Common myeloid progenitor, CD34-positive (primary cell): ENCODE measurements at regions of chr12 and their contacts with region 1.

Region 1: GRCh38 chr12:53220801-53221202 is 11.2 kb downstream of the RARG start:
- DNase-seq: peak; percentile 78 to 88 (median 84)
- H3K4me3 ChIP-seq: peak overlapping the region; percentile 44 to 90 (median 76)
- H3K27ac ChIP-seq: peak overlapping the region in 1 of 2 experiments; percentile 86
- H3K4me1 ChIP-seq: peaks cover 9 to 87% (median 70%) of the 10 kb centered on the region in 4 experiments
- H3K27me3 ChIP-seq: no peaks in the 10 kb centered on the region

Region 2: DNA sequence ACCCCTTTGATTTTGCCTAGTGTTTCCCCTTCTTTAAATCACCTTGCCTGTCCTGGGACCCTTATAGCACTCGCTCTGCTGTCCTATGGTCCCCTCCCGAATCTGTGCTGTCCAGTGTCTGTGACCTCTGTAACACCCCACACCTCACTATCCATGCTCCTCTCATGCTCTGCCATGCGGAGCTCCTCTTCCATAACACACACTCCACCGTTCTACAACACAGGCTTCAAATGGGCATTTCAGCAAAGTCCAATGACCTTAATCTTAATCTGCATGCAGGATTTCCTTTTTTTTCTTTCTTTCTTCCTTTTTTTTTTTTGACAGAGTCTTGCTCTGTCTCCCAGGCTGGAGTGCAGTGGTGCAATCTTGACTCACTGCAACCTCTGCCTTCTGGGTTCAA is 91.6 kb before region 1 on chr12:
- CTCF ChIA-PET with region 1: no interaction called
- POLR2A ChIA-PET with region 1: no interaction called
- DNase-seq: no peak
- H3K4me3 ChIP-seq: no peak overlapping the region
- H3K27ac ChIP-seq: no peak overlapping the region
- H3K4me1 ChIP-seq: peaks cover 0 to 15% (median 2%) of the 10 kb centered on the region in 4 experiments
- H3K27me3 ChIP-seq: no peaks in the 10 kb centered on the region

Region 3: DNA sequence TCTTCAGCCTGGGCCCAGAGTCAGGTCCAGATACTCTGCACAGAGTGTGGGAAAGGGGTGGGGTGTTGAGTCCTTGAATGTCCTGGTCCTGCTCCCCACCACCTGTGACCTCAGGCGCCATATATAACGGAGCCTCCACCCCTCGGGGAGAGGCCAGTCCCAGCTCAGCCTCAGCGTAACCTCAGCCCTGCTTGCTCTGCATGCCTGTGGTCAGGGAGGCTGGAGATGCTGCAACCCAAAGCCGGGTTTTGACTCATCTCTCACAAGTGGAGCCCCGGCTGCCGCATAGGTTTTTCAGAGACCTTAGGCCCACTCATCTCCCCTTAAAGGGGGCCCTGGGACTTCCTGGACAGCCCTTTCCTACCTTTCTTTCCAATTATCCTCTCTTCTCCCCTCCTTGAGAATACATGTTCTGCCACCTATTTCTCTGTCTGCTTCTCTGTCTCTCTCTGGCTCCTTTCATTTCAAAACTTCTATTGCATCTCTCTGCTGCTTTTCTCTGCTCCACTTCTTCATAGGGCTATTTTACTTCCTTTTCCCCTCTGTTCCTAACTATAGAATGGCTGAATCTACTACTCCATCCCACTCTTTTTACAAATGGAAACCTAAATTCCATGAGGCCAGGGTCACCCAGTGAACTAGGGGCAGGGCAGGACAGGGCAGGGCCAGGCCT is 14.9 kb before region 1 on chr12:
- CTCF ChIA-PET with region 1: interaction called, 212 read pairs
- POLR2A ChIA-PET with region 1: no interaction called
- DNase-seq: no peak
- H3K4me3 ChIP-seq: no peak overlapping the region
- H3K27ac ChIP-seq: no peak overlapping the region
- H3K4me1 ChIP-seq: peaks cover 12 to 64% (median 40%) of the 10 kb centered on the region in 4 experiments
- H3K27me3 ChIP-seq: no peaks in the 10 kb centered on the region

Region 4: GRCh38 chr12:53231826-53232645 is 11.2 kb after region 1 on chr12 and contains the start of gene RARG:
- CTCF ChIA-PET with region 1: interaction called, 212 read pairs
- POLR2A ChIA-PET with region 1: no interaction called
- DNase-seq: peak in 2 of 3 donors; percentile 56 to 65
- H3K4me3 ChIP-seq: peak within 1 kb of the TSS; percentile 20 to 79 (median 58)
- H3K27ac ChIP-seq: no peak within 1 kb of the TSS
- H3K4me1 ChIP-seq: peaks cover 2 to 41% (median 35%) of the 10 kb centered on the region in 4 experiments
- H3K27me3 ChIP-seq: peaks cover 0 to 4% (median 0%) of the 10 kb centered on the region in 5 experiments

Region 5: DNA sequence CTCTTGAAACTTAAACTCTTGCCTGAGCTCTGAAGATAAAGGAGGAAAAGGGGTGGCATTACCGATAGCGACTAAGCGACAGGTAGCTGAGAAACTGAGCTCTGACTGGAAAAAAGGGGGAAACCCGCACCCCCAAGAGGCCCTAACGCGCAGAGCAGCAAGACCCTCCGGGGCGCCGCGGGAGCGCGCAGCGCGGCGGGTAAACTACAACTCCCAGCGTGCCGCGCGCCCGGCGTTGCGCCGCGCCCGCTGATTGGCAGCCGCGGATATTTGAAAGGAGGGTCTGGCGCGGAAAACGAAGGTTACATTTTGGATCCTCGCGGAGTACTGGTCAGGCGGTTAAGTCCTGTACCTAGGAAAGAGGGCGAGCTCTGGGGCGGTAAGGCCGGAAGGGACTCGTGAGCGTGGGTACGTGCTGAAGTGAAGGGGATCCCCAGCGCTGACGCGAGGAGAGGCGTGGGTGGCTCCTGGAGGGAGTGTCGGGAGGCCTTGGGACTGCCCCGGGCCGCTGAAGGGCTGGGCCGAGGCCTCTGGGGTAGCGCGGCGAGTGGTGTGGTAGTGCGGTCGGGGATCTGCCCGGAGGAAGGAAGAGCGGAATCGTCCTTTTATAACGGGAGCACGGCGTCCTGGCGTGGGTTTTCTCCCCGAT is 47.3 kb after region 1 on chr12 and contains the start of gene ESPL1:
- CTCF ChIA-PET with region 1: interaction called, 299 read pairs
- POLR2A ChIA-PET with region 1: interaction called, 7 read pairs
- DNase-seq: peak; percentile 87 to 93 (median 92)
- H3K4me3 ChIP-seq: peak within 1 kb of the TSS; percentile 72 to 97 (median 84)
- H3K27ac ChIP-seq: peak within 1 kb of the TSS; percentile 50 to 84
- H3K4me1 ChIP-seq: peaks cover 2 to 35% (median 18%) of the 10 kb centered on the region in 4 experiments
- H3K27me3 ChIP-seq: no peaks in the 10 kb centered on the region

Region 6: DNA sequence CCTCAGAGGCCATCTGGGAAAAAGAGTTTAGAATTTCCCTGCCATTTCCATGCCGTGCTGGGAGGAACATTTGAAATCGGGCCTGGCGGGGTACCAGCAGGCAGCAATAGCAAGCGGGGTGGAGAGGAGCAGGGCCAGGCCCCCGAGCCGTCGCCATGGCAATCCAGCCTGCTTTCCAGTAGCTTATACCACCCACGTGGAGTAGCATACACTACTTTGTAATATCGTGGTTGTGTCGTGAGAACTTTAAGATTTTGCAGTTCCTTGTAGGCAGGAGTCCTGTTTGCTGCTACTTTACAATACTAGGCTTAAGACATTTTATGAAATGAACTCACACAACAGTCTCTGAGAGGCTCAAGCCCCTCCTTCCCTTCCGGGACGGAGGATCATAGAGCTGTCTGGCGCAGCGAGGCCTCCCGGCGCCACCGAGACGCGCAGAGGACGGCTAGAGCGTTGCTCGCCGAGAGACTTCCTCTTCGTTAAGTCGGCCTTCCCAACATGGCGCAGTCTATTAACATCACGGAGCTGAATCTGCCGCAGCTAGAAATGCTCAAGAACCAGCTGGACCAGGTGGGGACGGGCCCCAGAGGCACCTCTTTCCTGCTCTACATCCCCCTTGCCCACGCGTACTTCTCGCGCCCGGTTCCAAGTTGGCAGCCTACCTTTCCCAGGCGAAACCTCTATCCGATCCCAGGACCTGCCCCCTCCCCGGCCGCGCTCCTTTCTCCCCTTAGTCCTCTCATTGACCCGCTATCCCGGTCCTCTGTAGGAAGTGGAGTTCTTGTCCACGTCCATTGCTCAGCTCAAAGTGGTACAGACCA is 74.5 kb after region 1 on chr12 and contains the start of gene PFDN5:
- CTCF ChIA-PET with region 1: interaction called, 399 read pairs
- POLR2A ChIA-PET with region 1: interaction called, 3 read pairs
- DNase-seq: peak; percentile 94 to 95 (median 94)
- H3K4me3 ChIP-seq: peak within 1 kb of the TSS; percentile 83 to 96 (median 89)
- H3K27ac ChIP-seq: peak within 1 kb of the TSS; percentile 93 to 96
- H3K4me1 ChIP-seq: peaks cover 5 to 48% (median 42%) of the 10 kb centered on the region in 4 experiments
- H3K27me3 ChIP-seq: no peaks in the 10 kb centered on the region